Esophagus squamous epithelium (tissue), 5 donors: ENCODE measurements at regions of chr17 and their contacts with region 1.

Region 1: GRCh38 chr17:33520426-33521330 is 227.6 kb upstream of the ASIC2 start:
- DNase-seq: no peak
- H3K4me3 ChIP-seq: no peak overlapping the region
- H3K27ac ChIP-seq: no peak overlapping the region
- H3K4me1 ChIP-seq: no peaks in the 10 kb centered on the region
- H3K27me3 ChIP-seq: peaks cover 0 to 23% (median 0%) of the 10 kb centered on the region in 4 donors
- CTCF ChIP-seq: peak in 5 of 6 experiments; percentile 42 to 58 (median 48)
- POLR2A ChIP-seq: no peak

Region 2: GRCh38 chr17:33451221-33451620 is 69.5 kb before region 1 on chr17:
- intact Hi-C with region 1: no loop called
- DNase-seq: no peak
- H3K4me3 ChIP-seq: no peak overlapping the region
- H3K27ac ChIP-seq: no peak overlapping the region
- H3K4me1 ChIP-seq: no peaks in the 10 kb centered on the region
- H3K27me3 ChIP-seq: peaks cover 0 to 11% (median 0%) of the 10 kb centered on the region in 4 donors
- CTCF ChIP-seq: no peak
- POLR2A ChIP-seq: no peak

Region 3: DNA sequence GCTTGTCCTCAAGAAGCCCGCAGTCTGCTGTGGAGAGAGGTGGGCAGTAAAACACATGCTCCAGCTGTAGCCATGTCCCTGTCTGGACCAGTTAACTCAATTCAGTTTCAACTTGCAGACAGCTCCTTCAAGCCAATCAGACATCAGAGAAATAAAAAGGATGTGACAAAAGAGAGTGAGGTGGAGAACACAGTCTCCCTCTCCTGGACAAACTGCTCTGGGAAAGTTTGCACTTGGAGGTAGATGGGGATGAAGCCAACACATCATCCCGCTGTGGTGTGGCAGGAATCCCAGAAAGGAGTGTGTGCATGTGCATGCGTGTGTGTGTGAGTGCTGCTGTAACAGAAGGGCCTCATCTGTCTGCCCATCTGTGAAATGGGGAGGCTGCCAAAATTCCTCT is 131.0 kb after region 1 on chr17:
- intact Hi-C with region 1: loop called (anchors 10 kb)
- DNase-seq: no peak
- H3K4me3 ChIP-seq: no peak overlapping the region
- H3K27ac ChIP-seq: no peak overlapping the region
- H3K4me1 ChIP-seq: no peaks in the 10 kb centered on the region
- H3K27me3 ChIP-seq: peaks cover 0 to 47% (median 0%) of the 10 kb centered on the region in 4 donors
- CTCF ChIP-seq: peak in 1 of 6 experiments; percentile 5
- POLR2A ChIP-seq: no peak